H1 (cell line): ENCODE measurements at regions of chr4 and their contacts with region 1.

Region 1: DNA sequence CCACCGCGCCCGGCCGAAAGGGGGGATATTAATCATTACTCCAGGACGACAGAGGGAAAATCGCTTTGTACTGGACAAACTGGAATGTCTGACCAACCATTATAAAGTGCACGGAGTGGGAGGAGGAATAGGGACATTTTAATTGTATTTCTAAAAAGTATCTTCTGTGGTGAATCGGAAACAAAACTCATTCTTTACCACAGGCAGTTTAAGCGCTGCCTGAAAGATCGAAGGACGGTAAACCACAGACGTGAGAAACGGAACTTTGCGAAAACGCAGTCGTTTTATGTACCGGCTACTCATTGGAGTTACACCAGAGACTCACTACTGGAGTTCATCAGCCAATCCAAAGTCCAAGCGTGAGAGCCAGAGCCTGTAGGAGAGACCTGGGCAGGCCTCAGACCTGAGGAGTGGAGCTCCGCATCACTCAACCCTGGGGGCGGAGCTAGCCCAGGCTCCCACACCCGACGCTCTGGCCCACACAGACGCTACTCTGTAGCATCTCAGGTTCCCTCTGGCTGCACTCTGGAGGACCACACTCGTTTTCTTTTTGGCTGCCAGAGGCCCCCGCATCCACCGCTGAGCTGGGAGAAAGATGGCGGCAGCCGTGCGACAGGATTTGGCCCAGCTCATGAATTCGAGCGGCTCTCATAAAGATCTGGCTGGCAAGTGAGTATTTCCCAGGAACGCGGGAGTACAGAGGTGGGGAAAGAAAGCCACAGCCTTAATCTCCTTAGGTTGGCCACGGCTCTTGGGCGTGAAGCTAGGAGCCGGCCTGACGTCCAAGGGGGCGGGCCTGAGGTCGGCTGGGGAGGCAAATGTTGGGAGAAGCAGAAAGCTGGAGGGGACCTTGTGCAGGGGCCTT is at the start of gene COPS4:
- DNase-seq: peak; percentile 90 to 96
- H3K4me3 ChIP-seq: peak within 1 kb of the TSS; percentile 82 to 94 (median 90)
- H3K27ac ChIP-seq: peak within 1 kb of the TSS; percentile 67; the same call in 1 of the 2 replicates
- H3K4me1 ChIP-seq: peaks cover 0 to 3% (median under 1%) of the 10 kb centered on the region in 4 experiments; a peak in 1 of 7 replicates
- H3K27me3 ChIP-seq: no peaks in the 10 kb centered on the region; a peak in 1 of 7 replicates
- CTCF ChIP-seq: no peak
- EP300 ChIP-seq: peak in 1 of 2 experiments; percentile 63; a peak in 1 of 3 replicates
- POLR2A ChIP-seq: peak; percentile 75 to 90
- RAD21 ChIP-seq: no peak
- total RNA-seq, gene COPS4: 28.3 and 32.5 TPM in 2 replicates

Region 2: DNA sequence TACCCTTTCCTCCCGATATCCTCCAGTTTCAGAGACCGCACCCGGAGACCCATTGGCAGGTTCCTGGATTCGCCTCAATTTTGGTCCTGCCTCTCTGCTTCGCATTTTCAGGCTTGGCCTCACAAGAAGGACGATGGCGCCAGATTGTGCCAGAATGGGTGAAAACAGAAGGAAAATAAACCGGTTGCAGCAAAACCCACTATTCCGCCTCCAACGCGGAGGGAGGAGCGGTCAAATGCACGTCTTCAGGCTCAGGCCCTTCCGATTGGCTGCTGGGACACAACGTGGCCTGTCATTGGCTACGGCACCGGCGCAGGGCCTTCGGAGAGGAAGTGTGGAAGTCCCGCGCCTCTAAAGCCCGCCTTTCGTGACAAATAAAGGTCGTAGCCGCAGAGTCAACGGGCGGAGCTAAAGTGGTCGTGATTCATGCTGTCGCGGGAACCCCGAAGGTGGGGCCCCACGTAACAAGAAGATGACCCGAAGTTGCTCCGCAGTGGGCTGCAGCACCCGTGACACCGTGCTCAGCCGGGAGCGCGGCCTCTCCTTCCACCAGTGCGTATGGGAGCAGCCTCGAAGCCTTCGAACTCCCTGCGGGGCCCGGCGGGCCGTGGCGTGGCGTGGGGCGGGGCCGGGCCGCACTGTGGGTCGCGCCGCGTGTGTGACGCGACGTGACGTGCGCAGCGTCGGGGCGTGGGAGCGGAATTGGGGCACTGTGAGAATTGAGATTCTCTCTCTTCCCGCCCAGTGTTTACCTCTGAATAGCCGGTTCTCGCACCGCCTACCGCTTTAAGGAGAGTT is 134.3 kb before region 1 on chr4 and contains the start of gene THAP9:
- CTCF ChIA-PET with region 1: no interaction called
- POLR2A ChIA-PET with region 1: interaction called, 11 read pairs
- DNase-seq: peak; percentile 89 to 90
- H3K4me3 ChIP-seq: peak within 1 kb of the TSS; percentile 81 to 97 (median 89)
- H3K27ac ChIP-seq: peak within 1 kb of the TSS; percentile 89
- H3K4me1 ChIP-seq: peaks cover 0 to 2% (median 0%) of the 10 kb centered on the region in 4 experiments; a peak in 1 of 7 replicates
- H3K27me3 ChIP-seq: no peaks in the 10 kb centered on the region
- CTCF ChIP-seq: no peak
- EP300 ChIP-seq: no peak
- POLR2A ChIP-seq: peak; percentile 78 to 88
- RAD21 ChIP-seq: no peak
- total RNA-seq, gene THAP9: 13.2 and 17.0 TPM in 2 replicates

Region 3: DNA sequence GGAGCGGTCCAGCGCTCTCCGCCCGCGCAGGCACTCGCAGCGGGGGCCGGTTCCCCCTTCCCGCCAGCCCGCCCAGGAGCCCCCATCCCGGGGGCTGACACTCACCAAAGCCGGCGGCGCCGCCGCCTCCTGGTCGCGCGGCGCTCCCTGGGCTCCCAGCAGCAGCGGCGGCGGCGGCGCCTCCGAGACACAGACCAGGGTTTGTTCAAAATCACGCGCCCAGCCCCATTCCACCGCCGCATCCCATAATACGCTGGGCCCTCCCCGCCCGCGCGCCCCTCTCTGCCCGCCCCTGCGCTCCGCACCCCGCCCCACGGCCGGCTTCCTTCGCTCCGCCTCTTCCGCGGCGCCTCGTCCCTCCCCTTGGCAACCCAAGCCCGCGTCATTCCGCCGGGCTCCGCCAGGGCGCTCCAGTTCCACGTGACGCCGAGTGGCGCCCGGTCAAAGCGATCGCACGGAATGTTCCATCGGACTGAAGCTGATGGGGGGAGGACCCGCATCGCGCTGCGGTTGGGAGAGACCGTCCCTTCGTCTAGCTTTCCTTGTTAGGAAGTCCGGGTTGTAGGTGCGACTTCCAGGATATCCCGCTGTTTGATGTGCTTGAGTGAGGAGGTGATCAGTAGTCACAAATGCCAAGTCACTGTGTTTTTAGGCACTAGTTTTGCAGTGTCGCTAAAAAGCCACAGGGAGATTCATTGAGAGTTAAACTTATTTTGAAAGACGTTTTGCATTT is 22.0 kb before region 1 on chr4:
- CTCF ChIA-PET with region 1: interaction called, 3 read pairs
- POLR2A ChIA-PET with region 1: interaction called, 20 read pairs
- DNase-seq: peak; percentile 96
- H3K4me3 ChIP-seq: peak overlapping the region; percentile 67 to 98 (median 73)
- H3K27ac ChIP-seq: no peak overlapping the region
- H3K4me1 ChIP-seq: peaks cover 0 to 6% (median 3%) of the 10 kb centered on the region in 4 experiments; a peak in 3 of 7 replicates
- H3K27me3 ChIP-seq: peaks cover 0 to 6% (median 3%) of the 10 kb centered on the region in 4 experiments; a peak in 4 of 7 replicates
- CTCF ChIP-seq: peak; percentile 29 to 41 (median 41)
- EP300 ChIP-seq: peak in 1 of 2 experiments; percentile 100; a peak in 2 of 3 replicates
- POLR2A ChIP-seq: peak; percentile 45 to 72
- RAD21 ChIP-seq: peak; percentile 38 to 42

Region 4: DNA sequence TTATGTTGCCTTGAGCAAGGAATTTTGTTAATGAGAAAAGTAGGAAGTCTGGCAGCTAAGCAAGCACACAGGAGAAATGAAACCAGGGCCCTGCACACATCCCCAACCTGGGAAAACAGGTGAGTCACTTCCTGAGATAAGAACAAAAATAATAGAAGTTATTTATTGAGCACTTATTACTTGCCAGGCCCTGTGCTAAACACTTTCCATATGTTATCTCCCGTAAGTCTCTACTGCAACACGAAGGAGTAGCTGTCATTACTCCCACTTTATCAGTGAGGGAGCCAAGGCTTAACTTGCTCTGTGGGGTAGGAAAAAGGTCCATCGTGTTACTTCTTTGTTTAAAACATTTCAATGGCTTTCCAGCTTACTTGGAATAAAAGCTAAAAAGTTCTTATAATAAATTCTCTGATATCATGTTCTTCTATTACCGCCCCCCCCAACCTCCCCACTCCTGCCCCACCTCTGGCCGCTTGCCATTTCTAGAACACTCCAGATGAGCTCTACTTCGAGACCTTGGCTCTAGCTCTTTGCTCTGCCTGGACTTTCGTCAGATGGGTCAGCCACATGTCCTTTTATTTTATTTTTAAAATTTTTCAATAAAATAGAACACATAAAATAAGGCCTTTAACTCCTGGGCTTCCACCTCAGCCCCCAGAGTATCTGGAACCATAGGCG is 115.9 kb after region 1 on chr4:
- CTCF ChIA-PET with region 1: no interaction called
- POLR2A ChIA-PET with region 1: no interaction called
- DNase-seq: no peak
- H3K4me3 ChIP-seq: no peak overlapping the region
- H3K27ac ChIP-seq: no peak overlapping the region
- H3K4me1 ChIP-seq: no peaks in the 10 kb centered on the region
- H3K27me3 ChIP-seq: peaks cover 0 to 1% (median 0%) of the 10 kb centered on the region in 4 experiments; a peak in 1 of 7 replicates
- CTCF ChIP-seq: no peak
- EP300 ChIP-seq: no peak
- POLR2A ChIP-seq: no peak
- RAD21 ChIP-seq: no peak